Caco-2 (cell line): ENCODE measurements at regions of chr7 and their contacts with region 1.

Region 1: GRCh38 chr7:87876040-87876868 is at the starts of genes DBF4 and SLC25A40:
- DNase-seq: peak; percentile 98 to 99
- H3K4me3 ChIP-seq: peak within 1 kb of the TSS; percentile 61
- H3K4me3 Mint-ChIP-seq: peak within 1 kb of the TSS; percentile 70
- H3K27ac Mint-ChIP-seq: peak within 1 kb of the TSS; percentile 99
- H3K4me1 ChIP-seq: peaks cover 20% of the 10 kb centered on the region
- H3K4me1 Mint-ChIP-seq: peaks cover 28% of the 10 kb centered on the region
- H3K27me3 ChIP-seq: no peaks in the 10 kb centered on the region
- H3K27me3 Mint-ChIP-seq: no peaks in the 10 kb centered on the region
- CTCF ChIP-seq: no peak
- total RNA-seq, gene DBF4: 55.0 and 62.8 TPM in 2 replicates
- total RNA-seq, gene SLC25A40: 21.1 and 21.8 TPM in 2 replicates

Region 2: DNA sequence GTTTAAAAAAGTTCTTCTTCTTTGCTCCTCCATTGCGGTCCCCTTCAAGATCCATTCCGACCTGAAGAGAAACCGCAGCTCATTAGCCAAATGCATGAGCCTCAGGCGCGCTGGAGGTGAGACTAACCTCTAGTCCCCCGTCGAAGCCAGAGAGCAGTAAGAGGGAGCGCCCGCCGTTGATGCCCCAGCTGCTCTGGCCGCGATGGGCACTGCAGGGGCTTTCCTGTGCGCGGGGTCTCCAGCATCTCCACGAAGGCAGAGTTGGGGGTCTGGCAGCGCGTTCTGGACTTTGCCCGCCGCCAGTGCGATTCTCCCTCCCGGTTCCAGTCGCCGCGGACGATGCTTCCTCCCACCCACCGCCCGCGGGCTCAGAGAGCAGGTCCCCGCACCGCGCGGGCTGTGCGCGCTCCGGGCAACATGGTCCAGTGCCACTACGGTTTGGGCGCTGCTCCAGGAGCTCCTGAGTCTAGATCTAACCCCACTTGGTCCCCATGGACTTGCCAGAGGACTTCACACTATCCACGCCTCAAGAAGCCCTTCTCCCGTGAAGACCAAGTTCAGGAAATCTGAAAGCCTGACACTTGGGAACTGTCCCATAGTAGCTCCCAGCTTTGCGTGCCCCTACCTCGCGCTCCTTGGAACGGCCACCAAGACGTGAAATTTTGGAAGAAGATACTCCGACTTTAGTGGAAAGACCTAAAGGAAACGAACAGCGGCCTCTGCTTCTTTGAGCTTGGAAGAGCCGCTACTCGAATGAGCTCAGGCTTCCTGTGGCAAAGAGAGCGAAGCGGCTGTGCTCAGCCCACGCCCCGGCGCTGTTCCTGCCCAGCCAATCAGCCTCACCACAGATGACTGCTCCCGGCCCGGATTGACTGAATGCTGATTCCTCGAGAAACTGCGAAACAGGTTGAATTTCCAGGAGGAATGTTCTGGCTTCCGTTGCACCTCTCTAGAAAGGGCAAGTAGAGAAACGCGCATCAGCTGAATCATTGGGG is 275.8 kb before region 1 on chr7 and contains the start of gene ABCB1:
- CTCF ChIA-PET with region 1: no interaction called
- POLR2A ChIA-PET with region 1: no interaction called
- intact Hi-C with region 1: loop called (anchors 10 kb)
- DNase-seq: peak; percentile 61 to 70
- H3K4me3 ChIP-seq: peak within 1 kb of the TSS; percentile 29
- H3K4me3 Mint-ChIP-seq: peak within 1 kb of the TSS; percentile 85
- H3K27ac Mint-ChIP-seq: no peak within 1 kb of the TSS
- H3K4me1 ChIP-seq: peaks cover 17% of the 10 kb centered on the region
- H3K4me1 Mint-ChIP-seq: peaks cover 19% of the 10 kb centered on the region
- H3K27me3 ChIP-seq: no peaks in the 10 kb centered on the region
- H3K27me3 Mint-ChIP-seq: peaks cover 21% of the 10 kb centered on the region
- CTCF ChIP-seq: no peak
- total RNA-seq, gene ABCB1: 34.6 and 37.3 TPM in 2 replicates

Region 3: GRCh38 chr7:87784423-87784822 is 91.8 kb before region 1 on chr7:
- CTCF ChIA-PET with region 1: no interaction called
- POLR2A ChIA-PET with region 1: no interaction called
- intact Hi-C with region 1: no loop called
- DNase-seq: no peak
- H3K4me3 ChIP-seq: no peak overlapping the region
- H3K4me3 Mint-ChIP-seq: no peak overlapping the region
- H3K27ac Mint-ChIP-seq: no peak overlapping the region
- H3K4me1 ChIP-seq: no peaks in the 10 kb centered on the region
- H3K4me1 Mint-ChIP-seq: no peaks in the 10 kb centered on the region
- H3K27me3 ChIP-seq: peaks cover 3% of the 10 kb centered on the region; the same call in 1 of the 2 replicates
- H3K27me3 Mint-ChIP-seq: peaks cover 15% of the 10 kb centered on the region
- CTCF ChIP-seq: no peak

Region 4: GRCh38 chr7:87858417-87859100 is 17.7 kb before region 1 on chr7:
- CTCF ChIA-PET with region 1: interaction called, 3 read pairs
- POLR2A ChIA-PET with region 1: no interaction called
- intact Hi-C with region 1: loop called (anchors 1 kb)
- DNase-seq: no peak
- H3K4me3 ChIP-seq: no peak overlapping the region
- H3K4me3 Mint-ChIP-seq: no peak overlapping the region
- H3K27ac Mint-ChIP-seq: peak overlapping the region; percentile 46
- H3K4me1 ChIP-seq: peaks cover 15% of the 10 kb centered on the region; the same call in 1 of the 2 replicates
- H3K4me1 Mint-ChIP-seq: peaks cover 7% of the 10 kb centered on the region
- H3K27me3 ChIP-seq: no peaks in the 10 kb centered on the region
- H3K27me3 Mint-ChIP-seq: no peaks in the 10 kb centered on the region
- CTCF ChIP-seq: no peak

Region 5: GRCh38 chr7:88226886-88227516 is 350.7 kb after region 1 on chr7:
- CTCF ChIA-PET with region 1: no interaction called
- POLR2A ChIA-PET with region 1: no interaction called
- intact Hi-C with region 1: loop called (anchors 5 kb)
- DNase-seq: peak; percentile 79 to 85
- H3K4me3 ChIP-seq: no peak overlapping the region
- H3K4me3 Mint-ChIP-seq: no peak overlapping the region
- H3K27ac Mint-ChIP-seq: peak overlapping the region; percentile 53
- H3K4me1 ChIP-seq: peaks cover 36% of the 10 kb centered on the region
- H3K4me1 Mint-ChIP-seq: no peaks in the 10 kb centered on the region
- H3K27me3 ChIP-seq: no peaks in the 10 kb centered on the region
- H3K27me3 Mint-ChIP-seq: no peaks in the 10 kb centered on the region
- CTCF ChIP-seq: no peak